SK-N-SH (cell line): ENCODE measurements at regions of chr13 and their contacts with region 1.

Region 1: GRCh38 chr13:28819735-28820098 is 422 bp upstream of the MTUS2 start:
- DNase-seq: peak; percentile 85
- H3K4me3 ChIP-seq: peak overlapping the region in 1 of 2 experiments; percentile 30; a peak in 1 of 4 replicates
- H3K27ac ChIP-seq: no peak overlapping the region
- H3K4me1 ChIP-seq: no peaks in the 10 kb centered on the region
- H3K27me3 ChIP-seq: peaks cover 31% of the 10 kb centered on the region
- CTCF ChIP-seq: no peak
- EP300 ChIP-seq: no peak
- RAD21 ChIP-seq: no peak

Region 2: DNA sequence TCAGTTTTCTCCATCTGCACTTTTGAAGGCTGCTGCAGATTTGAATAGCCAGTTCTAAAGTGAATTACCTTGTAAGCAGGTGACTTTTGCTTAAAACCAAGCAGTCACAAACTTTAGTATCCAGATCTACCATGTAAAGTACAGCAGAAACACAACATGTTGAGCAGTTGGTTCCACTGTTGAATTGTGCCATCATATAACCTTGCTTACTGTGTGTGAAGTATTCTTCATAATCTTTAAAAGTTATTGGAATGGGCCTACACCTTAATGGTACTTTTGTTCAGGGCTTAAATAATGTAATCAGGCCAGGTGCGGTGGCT is 22.8 kb before region 1 on chr13:
- CTCF ChIA-PET with region 1: interaction called, 10 read pairs
- POLR2A ChIA-PET with region 1: no interaction called
- DNase-seq: no peak
- H3K4me3 ChIP-seq: peak overlapping the region in 1 of 2 experiments; percentile 52; a peak in 1 of 4 replicates
- H3K27ac ChIP-seq: no peak overlapping the region
- H3K4me1 ChIP-seq: no peaks in the 10 kb centered on the region
- H3K27me3 ChIP-seq: peaks cover 14% of the 10 kb centered on the region; the same call in 1 of the 2 replicates
- CTCF ChIP-seq: no peak
- EP300 ChIP-seq: no peak
- RAD21 ChIP-seq: no peak

Region 3: GRCh38 chr13:28837111-28837510 is 17.4 kb after region 1 on chr13:
- CTCF ChIA-PET with region 1: interaction called, 10 read pairs
- POLR2A ChIA-PET with region 1: no interaction called
- DNase-seq: no peak
- H3K4me3 ChIP-seq: no peak overlapping the region
- H3K27ac ChIP-seq: no peak overlapping the region
- H3K4me1 ChIP-seq: no peaks in the 10 kb centered on the region
- H3K27me3 ChIP-seq: no peaks in the 10 kb centered on the region
- CTCF ChIP-seq: no peak
- EP300 ChIP-seq: no peak
- RAD21 ChIP-seq: no peak